A549 (cell line): ENCODE measurements at regions of chr6 and their contacts with region 1.

Region 1: DNA sequence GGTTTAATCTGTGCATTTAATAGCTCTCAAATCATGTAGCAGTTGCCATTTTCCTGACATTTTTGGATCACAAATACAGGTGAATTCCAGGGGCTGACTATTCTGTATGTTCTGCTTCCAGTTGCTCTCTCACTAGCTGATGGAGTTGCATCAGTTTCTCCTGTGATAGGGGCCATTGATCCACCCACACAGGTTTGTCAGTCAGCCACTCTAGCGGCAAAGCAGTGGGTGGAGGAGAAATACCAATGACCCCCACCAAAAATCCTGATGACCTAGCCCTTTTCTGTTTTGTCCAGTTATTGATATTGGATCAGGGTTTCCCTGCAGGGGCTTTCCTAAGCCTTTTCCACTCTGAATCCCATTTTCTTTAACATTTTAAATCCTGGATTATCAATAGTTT is 72.3 kb upstream of the BTN3A2 start:
- DNase-seq: no peak
- ATAC-seq: no peak
- H3K4me3 ChIP-seq: no peak overlapping the region
- H3K27ac ChIP-seq: no peak overlapping the region
- H3K4me1 ChIP-seq: peaks cover 35% of the 10 kb centered on the region
- CTCF ChIP-seq: no peak
- EP300 ChIP-seq: no peak
- POLR2A ChIP-seq: no peak
- RAD21 ChIP-seq: no peak

Region 2: DNA sequence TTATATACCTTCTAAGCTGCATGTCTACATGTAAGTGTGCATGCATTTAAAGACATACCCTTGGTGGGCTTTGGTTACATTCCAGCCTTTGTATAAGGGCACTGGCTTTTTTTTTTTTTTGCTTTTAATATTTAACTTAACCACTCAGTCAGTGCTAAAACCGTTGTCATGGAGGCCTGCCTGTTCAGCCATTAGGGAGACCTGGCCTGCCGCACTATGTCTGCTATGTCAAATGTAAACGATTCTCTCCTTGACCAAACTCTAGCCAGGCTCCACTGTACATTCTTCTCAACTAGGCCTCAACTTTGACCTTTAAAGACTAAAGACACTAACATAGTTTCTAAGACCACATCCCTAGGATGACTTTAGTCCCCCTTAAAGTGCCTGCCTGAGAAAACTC is 23.6 kb after region 1 on chr6:
- CTCF ChIA-PET with region 1: no interaction called
- POLR2A ChIA-PET with region 1: no interaction called
- DNase-seq: no peak
- ATAC-seq: no peak
- H3K4me3 ChIP-seq: no peak overlapping the region
- H3K27ac ChIP-seq: no peak overlapping the region
- H3K4me1 ChIP-seq: peaks cover 14% of the 10 kb centered on the region
- CTCF ChIP-seq: no peak
- EP300 ChIP-seq: no peak
- POLR2A ChIP-seq: no peak
- RAD21 ChIP-seq: no peak

Region 3: GRCh38 chr6:27864906-27865849 is 1572.5 kb after region 1 on chr6:
- CTCF ChIA-PET with region 1: no interaction called
- POLR2A ChIA-PET with region 1: interaction called, 15 read pairs
- DNase-seq: peak; percentile 78 to 87
- ATAC-seq: peak; percentile 72 to 80
- H3K4me3 ChIP-seq: peak overlapping the region; percentile 52
- H3K27ac ChIP-seq: peak overlapping the region; percentile 74 to 81
- H3K4me1 ChIP-seq: 0 out of 3 replicates have a peak, but pooled peaks cover 4% of the 10 kb centered on the region
- CTCF ChIP-seq: no peak
- EP300 ChIP-seq: no peak
- POLR2A ChIP-seq: peak; percentile 32; the same call in 1 of the 2 replicates
- RAD21 ChIP-seq: no peak